Transverse colon (tissue), 4 donors: ENCODE measurements at regions of chr20 and their contacts with region 1.

Region 1: DNA sequence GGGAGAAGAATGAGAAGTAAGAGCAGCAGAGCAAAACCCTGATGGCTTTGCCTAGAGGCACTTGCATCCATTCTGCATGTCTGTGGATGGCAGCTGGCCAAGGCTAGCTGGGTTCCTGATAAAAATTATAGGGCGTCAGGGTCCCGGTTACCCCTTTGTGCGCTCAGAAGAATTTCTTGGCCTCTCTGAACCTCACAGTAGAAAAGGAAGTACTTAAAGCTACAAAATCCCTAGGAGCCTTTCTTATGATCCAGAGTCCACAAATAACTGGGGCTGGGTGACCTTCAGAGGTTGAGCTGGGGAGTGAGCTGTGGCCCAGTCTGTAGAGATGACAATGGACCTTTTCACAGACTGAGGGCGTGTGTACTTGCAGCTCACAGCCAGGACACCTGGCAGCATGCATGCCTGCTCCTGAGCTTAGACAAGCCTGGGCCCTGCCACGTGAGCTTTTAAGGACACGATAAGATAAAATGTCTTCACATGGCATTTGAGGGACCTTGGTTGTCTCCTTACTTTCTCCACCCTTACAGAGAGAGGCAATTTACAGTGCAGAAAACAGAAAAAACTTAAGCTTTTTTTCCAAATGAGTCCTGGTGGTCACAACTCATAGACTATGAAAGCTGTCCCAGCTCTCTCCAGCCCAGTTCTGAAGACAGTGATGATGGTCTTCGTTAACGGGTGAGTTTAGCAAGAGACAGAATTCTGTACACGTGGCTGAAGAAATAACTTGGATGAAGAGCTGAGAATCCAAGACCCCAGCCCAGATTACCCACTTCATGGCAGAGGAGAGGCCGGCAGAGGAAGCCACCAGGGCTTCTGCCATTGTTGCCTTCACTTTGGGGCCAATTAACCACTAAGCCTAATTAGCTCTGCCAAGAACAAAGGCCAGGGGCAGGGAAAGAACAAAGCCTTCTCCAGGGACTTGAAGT is 50.3 kb downstream of the FOXA2 start:
- DNase-seq: no peak
- H3K4me3 ChIP-seq: no peak overlapping the region
- H3K27ac ChIP-seq: no peak overlapping the region
- H3K4me1 ChIP-seq: no peaks in the 10 kb centered on the region
- H3K27me3 ChIP-seq: no peaks in the 10 kb centered on the region
- CTCF ChIP-seq: no peak
- EP300 ChIP-seq: no peak
- POLR2A ChIP-seq: no peak

Region 2: GRCh38 chr20:22515264-22515663 is 18.8 kb before region 1 on chr20:
- in situ Hi-C with region 1: no loop called
- intact Hi-C with region 1: loop called (anchors 1 kb)
- DNase-seq: no peak
- H3K4me3 ChIP-seq: no peak overlapping the region
- H3K27ac ChIP-seq: no peak overlapping the region
- H3K4me1 ChIP-seq: peaks cover 0 to 21% (median 7%) of the 10 kb centered on the region in 4 donors
- H3K27me3 ChIP-seq: no peaks in the 10 kb centered on the region
- CTCF ChIP-seq: no peak
- EP300 ChIP-seq: no peak
- POLR2A ChIP-seq: no peak

Region 3: GRCh38 chr20:22652681-22653588 is 118.8 kb after region 1 on chr20:
- in situ Hi-C with region 1: no loop called
- intact Hi-C with region 1: no loop called
- DNase-seq: no peak
- H3K4me3 ChIP-seq: no peak overlapping the region
- H3K27ac ChIP-seq: no peak overlapping the region
- H3K4me1 ChIP-seq: peaks cover 0 to 11% (median 6%) of the 10 kb centered on the region in 4 donors
- H3K27me3 ChIP-seq: peaks cover 21% of the 10 kb centered on the region
- CTCF ChIP-seq: no peak
- EP300 ChIP-seq: no peak
- POLR2A ChIP-seq: no peak

Region 4: GRCh38 chr20:22684072-22684762 is 150.1 kb after region 1 on chr20:
- in situ Hi-C with region 1: no loop called
- intact Hi-C with region 1: no loop called
- DNase-seq: peak; percentile 57
- H3K4me3 ChIP-seq: no peak overlapping the region
- H3K27ac ChIP-seq: no peak overlapping the region
- H3K4me1 ChIP-seq: no peaks in the 10 kb centered on the region
- H3K27me3 ChIP-seq: no peaks in the 10 kb centered on the region
- CTCF ChIP-seq: peak; percentile 78 to 86 (median 81)
- EP300 ChIP-seq: no peak
- POLR2A ChIP-seq: no peak